WTC11 (cell line): ENCODE measurements at regions of chr1 and their contacts with region 1.

Region 1: GRCh38 chr1:16155532-16156410 is at the start of gene EPHA2:
- DNase-seq: peak; percentile 97
- ATAC-seq: peak; percentile 74
- H3K4me3 Mint-ChIP-seq: peak within 1 kb of the TSS; percentile 86
- H3K27ac Mint-ChIP-seq: peak within 1 kb of the TSS; percentile 94
- H3K4me1 Mint-ChIP-seq: peaks cover 45% of the 10 kb centered on the region
- H3K27me3 Mint-ChIP-seq: no peaks in the 10 kb centered on the region
- CTCF ChIP-seq: no peak
- total RNA-seq, gene EPHA2: 31.4 to 44.4 TPM (median 31.7 TPM) in 3 replicates

Region 2: GRCh38 chr1:16187748-16188401 is 32.1 kb after region 1 on chr1:
- CTCF ChIA-PET with region 1: interaction called, 25 read pairs
- POLR2A ChIA-PET with region 1: no interaction called
- DNase-seq: peak; percentile 85
- ATAC-seq: peak; percentile 84
- H3K4me3 Mint-ChIP-seq: no peak overlapping the region
- H3K27ac Mint-ChIP-seq: no peak overlapping the region
- H3K4me1 Mint-ChIP-seq: no peaks in the 10 kb centered on the region
- H3K27me3 Mint-ChIP-seq: no peaks in the 10 kb centered on the region; the same call in 1 of the 2 replicates
- CTCF ChIP-seq: peak; percentile 90